ENCODE measurements at regions of chr2 and their contacts with region 1.

Region 1: DNA sequence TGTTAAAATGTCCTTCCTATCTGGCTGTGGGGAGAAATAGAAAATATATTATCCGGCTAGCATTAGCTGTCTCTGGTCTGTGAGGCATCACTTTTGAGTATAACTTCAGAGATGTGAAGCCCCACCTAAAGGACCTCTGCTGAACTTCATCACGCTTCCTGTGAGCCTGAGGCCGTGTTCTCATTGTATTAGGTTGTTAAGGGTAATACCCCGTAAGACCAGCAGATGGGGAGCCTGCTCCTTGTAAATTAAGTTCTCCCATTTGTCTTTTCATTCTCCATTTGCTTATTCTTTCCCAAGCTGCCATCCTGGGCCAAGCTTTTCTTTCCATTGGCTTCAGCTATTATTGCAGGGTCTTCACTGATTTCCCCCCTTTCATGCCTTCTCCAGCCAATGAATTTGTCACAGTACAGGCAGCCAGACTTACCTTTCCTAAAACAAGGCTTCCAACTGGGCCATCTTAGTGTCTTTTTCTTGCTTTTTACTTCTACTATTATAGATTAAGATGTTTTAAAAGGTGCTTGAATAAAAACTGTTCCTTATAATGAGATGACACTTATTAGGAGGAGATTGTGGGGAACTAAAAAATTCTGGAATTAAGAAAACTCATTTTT is 12.4 kb downstream of the NIF3L1 start:
- DNase-seq: peak; percentile 82
- CTCF ChIP-seq: peak; percentile 64

Region 2: GRCh38 chr2:200913654-200914053 is 12.1 kb after region 1 on chr2:
- CTCF ChIA-PET with region 1: interaction called, 13 read pairs
- POLR2A ChIA-PET with region 1: no interaction called
- DNase-seq: no peak
- CTCF ChIP-seq: no peak

Region 3: DNA sequence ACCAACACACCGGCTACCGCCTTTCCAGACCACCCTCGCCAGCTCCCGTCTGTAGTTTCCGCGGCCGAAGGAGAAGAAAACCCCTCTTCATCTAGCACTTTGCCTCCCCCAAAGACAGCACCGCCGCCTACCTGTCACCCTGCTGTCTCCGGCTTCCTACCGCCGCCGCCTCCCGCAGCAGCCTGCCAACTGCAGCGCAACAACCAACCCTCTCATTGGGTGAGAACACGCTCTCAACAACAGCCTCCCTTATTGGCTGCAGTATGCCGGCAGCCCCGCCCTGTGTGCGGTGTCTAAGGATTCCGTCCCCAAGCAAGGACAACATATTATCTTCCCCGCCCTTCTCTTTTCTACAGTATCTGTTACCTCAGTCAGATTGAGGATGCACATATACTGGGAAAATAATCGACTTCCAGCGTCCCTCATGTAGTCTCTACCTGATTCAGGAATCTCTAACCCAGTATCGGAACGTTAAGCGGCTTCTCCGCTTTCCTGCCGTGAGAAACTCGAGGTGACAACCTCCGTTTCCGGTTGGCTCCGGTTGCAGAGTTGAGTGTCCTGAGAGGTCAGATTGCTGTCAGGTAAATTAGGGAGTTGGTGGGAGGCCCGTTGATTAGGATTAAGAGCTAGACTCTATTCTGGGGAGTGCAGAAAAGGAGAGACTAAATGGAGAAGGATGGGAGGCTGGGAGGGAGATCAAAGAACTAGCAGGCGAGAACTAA is 170.1 kb after region 1 on chr2 and contains the starts of genes HYCC2 and NDUFB3:
- CTCF ChIA-PET with region 1: interaction called, 126 read pairs
- POLR2A ChIA-PET with region 1: interaction called, 3 read pairs
- DNase-seq: peak; percentile 96
- CTCF ChIP-seq: peak; percentile 38

Region 4: GRCh38 chr2:201182650-201183364 is 281.2 kb after region 1 on chr2 and contains the start of gene CASP10:
- CTCF ChIA-PET with region 1: interaction called, 166 read pairs
- POLR2A ChIA-PET with region 1: no interaction called
- DNase-seq: peak; percentile 67
- CTCF ChIP-seq: peak; percentile 62